OCI-LY7 (cell line): ENCODE measurements at regions of chr1 and their contacts with region 1.

Region 1: DNA sequence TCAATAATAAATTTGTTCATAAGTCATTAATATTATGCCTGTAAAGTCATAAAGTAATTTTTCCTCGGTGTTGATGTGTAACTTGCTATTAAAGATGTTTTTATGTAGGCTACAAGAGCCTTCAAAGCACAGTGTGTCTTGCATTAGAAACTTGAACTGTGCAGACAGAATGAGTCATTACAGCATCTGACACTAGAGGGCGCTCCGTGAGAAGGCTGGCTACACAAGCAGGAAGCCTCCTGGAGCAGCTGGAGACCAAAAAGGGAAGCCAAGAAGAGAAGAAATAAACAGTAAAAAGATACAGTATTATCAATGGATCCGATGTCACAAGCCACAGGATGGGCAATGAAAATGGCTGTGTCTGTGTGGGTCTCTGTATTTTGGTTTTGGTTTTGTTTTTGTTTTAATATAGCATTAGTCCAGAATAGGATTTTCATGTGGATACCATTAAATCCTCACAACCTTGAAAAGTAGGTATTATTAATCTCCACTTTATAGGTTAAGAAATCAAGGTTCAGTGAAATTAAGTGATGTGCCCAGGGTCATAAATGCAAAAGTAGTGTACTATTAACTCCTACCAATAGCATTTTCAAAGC is 16.1 kb upstream of the LRRC8D start:
- DNase-seq: peak; percentile 88
- H3K4me3 ChIP-seq: no peak overlapping the region
- H3K27ac ChIP-seq: no peak overlapping the region
- H3K4me1 ChIP-seq: no peaks in the 10 kb centered on the region
- CTCF ChIP-seq: peak; percentile 100

Region 2: DNA sequence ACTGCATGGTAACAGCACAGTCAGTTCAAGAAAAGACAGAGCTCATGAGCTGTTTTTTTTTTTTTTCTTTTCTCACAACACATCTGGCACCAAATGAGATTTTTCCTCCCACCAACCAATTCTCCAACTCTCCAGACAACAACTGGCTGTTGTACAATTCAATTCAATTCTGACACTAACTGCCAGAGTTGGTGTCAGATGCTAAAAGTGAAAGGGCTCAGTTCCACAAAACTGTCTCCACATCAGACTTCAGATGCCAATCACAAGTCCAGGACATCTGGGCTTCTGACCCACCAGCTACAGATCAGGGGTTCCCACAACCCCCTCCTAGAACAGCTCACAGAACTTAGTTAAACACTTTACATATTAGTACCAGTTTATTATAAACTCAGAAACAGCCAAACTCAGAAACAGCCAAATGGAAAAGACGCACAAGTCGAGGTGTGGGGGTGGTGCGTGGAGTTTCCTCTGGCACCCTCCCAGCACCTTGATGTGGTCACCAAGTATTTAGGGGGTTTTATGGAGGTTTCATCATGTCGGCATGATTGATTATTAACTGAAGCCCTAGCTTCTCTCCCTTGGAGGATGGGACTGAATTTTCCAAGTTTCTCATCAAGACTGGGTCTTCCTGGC is 23.1 kb before region 1 on chr1:
- CTCF ChIA-PET with region 1: no interaction called
- POLR2A ChIA-PET with region 1: no interaction called
- intact Hi-C with region 1: no loop called
- DNase-seq: no peak
- H3K4me3 ChIP-seq: no peak overlapping the region
- H3K27ac ChIP-seq: no peak overlapping the region
- H3K4me1 ChIP-seq: no peaks in the 10 kb centered on the region
- CTCF ChIP-seq: no peak

Region 3: GRCh38 chr1:89843281-89844121 is 38.8 kb after region 1 on chr1:
- CTCF ChIA-PET with region 1: no interaction called
- POLR2A ChIA-PET with region 1: no interaction called
- intact Hi-C with region 1: loop called (anchors 1 kb)
- DNase-seq: peak; percentile 85
- H3K4me3 ChIP-seq: peak overlapping the region; percentile 87
- H3K27ac ChIP-seq: peak overlapping the region; percentile 52
- H3K4me1 ChIP-seq: peaks cover 41% of the 10 kb centered on the region
- CTCF ChIP-seq: peak; percentile 80

Region 4: GRCh38 chr1:89953072-89953626 is 148.4 kb after region 1 on chr1:
- CTCF ChIA-PET with region 1: no interaction called
- POLR2A ChIA-PET with region 1: no interaction called
- intact Hi-C with region 1: loop called (anchors 1 kb)
- DNase-seq: peak; percentile 38
- H3K4me3 ChIP-seq: no peak overlapping the region
- H3K27ac ChIP-seq: no peak overlapping the region
- H3K4me1 ChIP-seq: peaks cover 10% of the 10 kb centered on the region
- CTCF ChIP-seq: peak; percentile 68

Region 5: DNA sequence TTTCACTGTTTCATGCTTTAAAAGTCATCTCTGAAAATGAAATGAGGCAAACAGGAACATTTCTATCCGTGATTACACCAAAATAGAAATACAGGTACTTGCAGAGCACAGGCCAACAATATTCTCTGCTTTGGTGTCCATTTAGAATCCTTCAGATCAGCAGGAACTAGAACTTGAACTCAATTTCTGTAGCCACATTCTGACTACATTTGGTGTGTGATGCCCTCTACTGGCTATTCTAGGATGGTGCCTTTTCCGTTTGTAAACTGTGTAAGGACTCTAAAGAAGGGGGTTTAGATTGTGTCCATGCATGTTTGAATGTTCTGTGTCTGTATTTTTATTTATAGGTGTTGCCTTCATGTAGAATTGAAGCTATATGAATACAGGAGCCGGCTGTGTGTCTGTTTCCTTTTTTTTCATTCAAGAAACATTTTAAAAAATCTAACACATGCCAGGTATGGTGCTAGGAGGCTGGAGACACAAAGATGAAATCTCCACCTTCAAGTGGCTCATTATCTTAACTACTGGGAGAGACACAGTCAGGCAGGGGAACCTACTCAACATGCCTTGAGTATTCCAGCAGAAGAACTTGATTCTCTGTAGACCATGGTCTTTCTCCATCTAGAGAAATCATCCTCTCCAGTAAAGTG is 182.6 kb after region 1 on chr1:
- CTCF ChIA-PET with region 1: no interaction called
- POLR2A ChIA-PET with region 1: interaction called, 5 read pairs
- intact Hi-C with region 1: loop called (anchors 1 kb)
- DNase-seq: peak; percentile 81
- H3K4me3 ChIP-seq: no peak overlapping the region
- H3K27ac ChIP-seq: no peak overlapping the region
- H3K4me1 ChIP-seq: peaks cover 8% of the 10 kb centered on the region
- CTCF ChIP-seq: peak; percentile 96